ENCODE measurements at regions of chrX and their contacts with region 1.

Region 1: DNA sequence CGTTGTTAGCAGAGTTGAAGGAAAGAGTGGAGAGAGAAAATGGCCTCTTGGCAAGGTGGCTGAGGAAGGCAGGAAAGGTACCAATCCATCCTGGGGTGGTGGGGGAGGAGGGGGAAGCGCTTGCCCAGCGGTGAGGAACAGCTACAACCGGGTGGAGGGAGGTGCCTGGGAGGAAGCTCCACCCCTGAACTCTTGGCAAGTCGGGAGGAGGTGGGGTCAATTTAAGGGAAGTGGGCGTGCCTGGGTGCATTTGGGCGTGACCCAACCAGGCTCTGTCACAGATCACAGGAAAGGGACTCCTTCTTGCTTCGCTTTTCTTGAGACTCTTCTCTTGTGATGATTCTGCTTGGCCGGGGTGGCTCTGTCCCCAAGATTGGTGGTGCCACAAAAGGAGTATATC is 41.7 kb downstream of the BCORL1 start:
- DNase-seq: peak; percentile 42 to 86 (median 81)
- ATAC-seq: peak; percentile 100
- H3K4me3 ChIP-seq: no peak overlapping the region
- H3K4me3 Mint-ChIP-seq: peak overlapping the region in 7 of 10 donors; percentile 43 to 75 (median 50)
- H3K27ac ChIP-seq: peak overlapping the region; percentile 34
- H3K27ac Mint-ChIP-seq: peak overlapping the region; percentile 54 to 81 (median 76)
- H3K4me1 ChIP-seq: peaks cover 4 to 13% of the 10 kb centered on the region in 2 donors
- H3K4me1 Mint-ChIP-seq: peaks cover 0 to 19% (median 10%) of the 10 kb centered on the region in 7 donors
- H3K27me3 ChIP-seq: no peaks in the 10 kb centered on the region
- H3K27me3 Mint-ChIP-seq: no peaks in the 10 kb centered on the region

Region 2: DNA sequence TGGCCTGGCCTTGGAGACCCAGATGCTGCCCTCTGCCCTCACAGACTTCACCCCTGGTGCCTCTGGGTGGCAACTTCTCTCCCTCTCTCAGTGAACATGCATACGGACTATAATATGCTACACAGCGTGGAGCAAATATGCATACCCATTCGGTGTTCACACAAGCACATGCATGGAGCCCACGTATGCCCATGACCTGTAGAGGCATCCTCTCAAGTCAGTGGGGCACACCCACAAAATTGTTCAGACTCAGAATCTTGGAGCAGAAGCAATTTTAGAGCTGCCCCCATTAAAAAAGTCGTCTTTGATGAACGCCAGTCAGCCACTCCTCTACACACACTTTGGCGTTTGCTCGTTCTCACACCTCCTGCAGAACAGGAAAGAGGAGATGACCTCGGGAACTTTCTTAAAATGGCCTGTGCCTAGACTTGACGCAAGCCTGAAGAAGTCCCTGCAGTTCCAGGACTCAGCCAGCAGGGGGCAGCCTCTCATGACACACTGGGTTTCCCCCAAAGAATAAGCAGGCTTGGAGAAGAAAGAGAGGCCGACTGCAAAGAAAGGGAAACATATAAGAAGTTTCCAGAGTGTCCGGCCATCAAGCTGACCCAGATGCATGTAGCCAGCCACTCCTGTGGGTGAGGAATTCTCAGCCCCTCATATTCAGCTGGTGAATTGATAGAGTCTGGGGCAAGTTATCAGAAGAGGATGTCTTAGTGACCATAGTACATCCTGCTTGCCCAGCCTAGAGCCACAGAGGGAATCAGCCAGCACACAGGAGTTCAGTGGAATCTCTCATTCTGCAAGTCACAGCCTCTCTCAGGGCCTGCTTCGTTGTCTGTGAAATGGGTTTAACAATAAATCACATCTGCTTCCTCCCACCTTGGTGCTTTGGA is 386.7 kb before region 1 on chrX:
- CTCF ChIA-PET with region 1: interaction called, 4 read pairs
- POLR2A ChIA-PET with region 1: no interaction called
- intact Hi-C with region 1: loop called in 1 of 2 experiments (anchors 1 kb)
- DNase-seq: peak; percentile 48 to 80 (median 63)
- ATAC-seq: peak; percentile 92
- H3K4me3 ChIP-seq: no peak overlapping the region
- H3K4me3 Mint-ChIP-seq: no peak overlapping the region
- H3K27ac ChIP-seq: no peak overlapping the region
- H3K27ac Mint-ChIP-seq: peak overlapping the region in 3 of 9 donors; percentile 34 to 68 (median 55)
- H3K4me1 ChIP-seq: peaks cover 0 to 4% of the 10 kb centered on the region in 2 donors
- H3K4me1 Mint-ChIP-seq: peaks cover 0 to 10% (median 0%) of the 10 kb centered on the region in 7 donors
- H3K27me3 ChIP-seq: no peaks in the 10 kb centered on the region
- H3K27me3 Mint-ChIP-seq: no peaks in the 10 kb centered on the region

Region 3: DNA sequence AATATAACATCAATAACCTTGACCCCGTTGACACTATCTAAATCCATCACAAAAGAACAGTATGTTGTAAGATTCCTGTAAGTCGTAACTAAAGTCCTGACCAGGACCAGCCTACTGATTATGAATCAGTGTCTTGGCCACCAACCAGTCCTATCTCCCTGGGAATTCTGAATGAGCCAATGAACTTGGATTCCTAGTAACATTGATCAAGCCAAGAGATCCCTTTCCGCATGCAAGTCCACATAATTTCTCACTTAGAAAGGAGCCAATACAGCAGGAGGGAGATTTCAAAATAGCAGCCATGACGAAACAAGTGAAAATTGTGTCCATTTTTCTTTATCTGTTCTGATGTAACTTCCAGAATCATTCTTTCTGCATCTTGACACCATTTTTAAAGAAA is 275.8 kb before region 1 on chrX:
- CTCF ChIA-PET with region 1: no interaction called
- POLR2A ChIA-PET with region 1: no interaction called
- intact Hi-C with region 1: no loop called
- DNase-seq: no peak
- ATAC-seq: no peak
- H3K4me3 ChIP-seq: no peak overlapping the region
- H3K4me3 Mint-ChIP-seq: no peak overlapping the region
- H3K27ac ChIP-seq: no peak overlapping the region
- H3K27ac Mint-ChIP-seq: no peak overlapping the region
- H3K4me1 ChIP-seq: peaks cover 14 to 19% of the 10 kb centered on the region in 2 donors
- H3K4me1 Mint-ChIP-seq: peaks cover 20 to 42% (median 32%) of the 10 kb centered on the region in 7 donors
- H3K27me3 ChIP-seq: no peaks in the 10 kb centered on the region
- H3K27me3 Mint-ChIP-seq: no peaks in the 10 kb centered on the region

Region 4: GRCh38 chrX:129925305-129926092 is 98.6 kb before region 1 on chrX:
- CTCF ChIA-PET with region 1: interaction called, 106 read pairs
- POLR2A ChIA-PET with region 1: no interaction called
- intact Hi-C with region 1: loop called (anchors 1 kb)
- DNase-seq: peak; percentile 18 to 74 (median 67)
- ATAC-seq: peak; percentile 89
- H3K4me3 ChIP-seq: no peak overlapping the region
- H3K4me3 Mint-ChIP-seq: no peak overlapping the region
- H3K27ac ChIP-seq: no peak overlapping the region
- H3K27ac Mint-ChIP-seq: peak overlapping the region in 1 of 9 donors; percentile 41
- H3K4me1 ChIP-seq: no peaks in the 10 kb centered on the region
- H3K4me1 Mint-ChIP-seq: peaks cover 0 to 5% (median 0%) of the 10 kb centered on the region in 7 donors
- H3K27me3 ChIP-seq: no peaks in the 10 kb centered on the region
- H3K27me3 Mint-ChIP-seq: no peaks in the 10 kb centered on the region

Region 5: GRCh38 chrX:129957241-129958082 is 66.7 kb before region 1 on chrX:
- CTCF ChIA-PET with region 1: no interaction called
- POLR2A ChIA-PET with region 1: no interaction called
- intact Hi-C with region 1: loop called (anchors 1 to 2 kb)
- DNase-seq: peak in 2 of 9 donors; percentile 8 to 66
- ATAC-seq: peak; percentile 74
- H3K4me3 ChIP-seq: peak overlapping the region; percentile 47
- H3K4me3 Mint-ChIP-seq: peak overlapping the region; percentile 60 to 80 (median 68)
- H3K27ac ChIP-seq: peak overlapping the region; percentile 45
- H3K27ac Mint-ChIP-seq: peak overlapping the region in 7 of 9 donors; percentile 6 to 58 (median 32)
- H3K4me1 ChIP-seq: peaks cover 5 to 12% of the 10 kb centered on the region in 2 donors
- H3K4me1 Mint-ChIP-seq: peaks cover 11 to 31% (median 28%) of the 10 kb centered on the region in 7 donors
- H3K27me3 ChIP-seq: no peaks in the 10 kb centered on the region
- H3K27me3 Mint-ChIP-seq: peaks cover 0 to 8% (median 0%) of the 10 kb centered on the region in 5 donors

Region 6: DNA sequence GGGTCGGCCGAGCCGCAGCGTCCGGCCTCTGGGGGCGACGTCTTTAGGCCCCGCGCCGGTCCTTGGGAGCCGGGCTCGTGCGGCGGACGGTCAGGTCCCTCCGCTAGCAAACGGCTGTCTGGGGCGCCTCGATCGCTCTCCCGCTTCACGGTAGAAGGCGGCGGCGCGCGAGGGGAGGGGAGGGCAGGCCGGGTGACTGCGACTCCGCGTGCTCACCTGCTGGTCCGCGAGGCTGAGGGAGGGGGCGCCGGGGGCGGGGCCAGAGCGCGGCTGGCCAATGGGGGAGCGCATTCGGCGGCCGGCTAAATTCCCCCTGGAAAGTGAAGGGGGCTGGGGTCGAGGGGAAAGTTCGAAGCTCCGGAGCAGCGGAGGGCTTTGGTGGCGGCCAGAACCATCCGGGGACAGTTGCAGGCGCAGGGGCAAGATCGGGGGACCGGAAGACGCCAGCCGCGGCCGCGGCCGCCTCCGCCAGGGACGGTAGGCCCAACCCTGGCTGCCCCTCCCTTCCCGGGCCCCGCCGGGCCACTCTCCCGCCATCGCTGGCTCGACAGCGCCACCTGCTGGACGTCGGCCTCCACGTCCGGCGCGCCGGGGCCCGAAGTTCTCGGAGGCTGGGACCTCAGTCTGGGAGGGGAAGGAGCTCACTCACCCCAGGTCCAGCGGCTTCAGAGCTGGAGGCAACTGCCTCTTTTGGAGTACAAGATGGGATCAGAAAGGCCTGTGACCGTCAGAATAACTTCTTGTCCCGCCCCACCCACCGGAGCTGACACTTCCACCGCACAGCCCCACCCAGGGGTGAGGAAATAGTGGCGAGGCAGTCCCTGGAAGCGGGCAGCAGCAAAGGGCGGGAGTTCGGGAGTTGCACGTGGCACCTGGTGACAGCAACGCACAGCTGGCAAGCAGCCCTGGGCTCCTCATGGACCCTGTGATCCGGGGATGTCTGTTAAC is 36.3 kb after region 1 on chrX:
- CTCF ChIA-PET with region 1: interaction called, 3 read pairs
- POLR2A ChIA-PET with region 1: interaction called, 3 read pairs
- intact Hi-C with region 1: loop called (anchors 1 to 5 kb)
- DNase-seq: peak; percentile 51 to 92 (median 68)
- ATAC-seq: peak; percentile 95
- H3K4me3 ChIP-seq: peak overlapping the region; percentile 51
- H3K4me3 Mint-ChIP-seq: peak overlapping the region; percentile 54 to 79 (median 71)
- H3K27ac ChIP-seq: peak overlapping the region; percentile 60
- H3K27ac Mint-ChIP-seq: peak overlapping the region in 2 of 9 donors; percentile 26 to 76
- H3K4me1 ChIP-seq: no peaks in the 10 kb centered on the region
- H3K4me1 Mint-ChIP-seq: peaks cover 0 to 14% (median 6%) of the 10 kb centered on the region in 7 donors
- H3K27me3 ChIP-seq: no peaks in the 10 kb centered on the region
- H3K27me3 Mint-ChIP-seq: no peaks in the 10 kb centered on the region

Measured in naive thymus-derived CD4-positive, alpha-beta T cell (primary cell).